Breast epithelium (tissue), 4 donors: ENCODE measurements at regions of chr10 and their contacts with region 1.

Region 1: GRCh38 chr10:60314069-60314940 is 75.4 kb downstream of the ANK3 start:
- DNase-seq: no peak
- H3K4me3 ChIP-seq: no peak overlapping the region
- H3K27ac ChIP-seq: no peak overlapping the region
- H3K4me1 ChIP-seq: no peaks in the 10 kb centered on the region
- H3K27me3 ChIP-seq: no peaks in the 10 kb centered on the region
- CTCF ChIP-seq: no peak
- POLR2A ChIP-seq: no peak

Region 2: GRCh38 chr10:60350400-60350799 is 36.1 kb after region 1 on chr10:
- intact Hi-C with region 1: loop called (anchors 1 kb)
- DNase-seq: no peak
- H3K4me3 ChIP-seq: no peak overlapping the region
- H3K27ac ChIP-seq: no peak overlapping the region
- H3K4me1 ChIP-seq: no peaks in the 10 kb centered on the region
- H3K27me3 ChIP-seq: no peaks in the 10 kb centered on the region
- CTCF ChIP-seq: no peak
- POLR2A ChIP-seq: no peak